ENCODE measurements at regions of chr1 and their contacts with region 1.

Region 1: DNA sequence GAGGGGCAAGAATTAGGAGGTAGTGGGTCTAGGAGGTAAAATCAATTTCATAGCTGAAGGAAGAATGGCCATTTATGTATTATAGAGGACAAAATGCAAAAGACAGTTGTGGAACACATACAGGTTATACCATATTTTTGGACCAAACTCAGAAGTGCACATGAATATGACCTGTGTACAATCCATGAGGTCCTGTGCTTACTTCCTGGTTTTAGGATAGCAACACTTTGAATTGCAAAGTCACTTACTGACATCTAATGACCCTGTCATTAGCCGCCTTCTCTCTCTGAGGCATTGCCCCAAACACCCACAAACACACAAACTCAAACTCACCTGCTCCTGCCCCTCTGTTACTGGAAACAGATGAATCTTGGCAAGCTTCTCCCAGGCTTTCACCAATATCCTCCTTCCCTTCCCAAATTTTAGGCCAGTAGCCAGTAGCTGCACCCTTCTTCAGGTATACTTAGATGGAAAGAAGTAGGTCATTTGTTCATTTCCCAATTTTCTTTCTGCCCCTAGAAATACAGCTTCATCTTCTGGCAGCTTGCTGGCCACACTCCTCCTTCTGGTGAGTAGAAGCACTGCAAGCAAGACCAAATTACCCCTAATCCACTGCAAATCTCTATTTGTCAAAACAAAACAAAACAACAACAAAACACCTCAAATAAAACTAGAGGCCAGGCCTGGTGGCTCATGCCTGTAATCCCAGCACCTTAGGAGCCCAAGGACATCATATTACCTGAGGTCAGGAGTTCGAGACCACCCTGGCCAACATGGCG is 13.7 kb upstream of the RPL5 start:
- DNase-seq: peak in 1 of 2 experiments; percentile 58
- H3K4me3 ChIP-seq: no peak overlapping the region
- H3K27ac ChIP-seq: no peak overlapping the region
- H3K4me1 ChIP-seq: no peaks in the 10 kb centered on the region
- H3K27me3 ChIP-seq: no peaks in the 10 kb centered on the region
- CTCF ChIP-seq: peak in 2 of 3 experiments; percentile 66 to 69; a peak in 3 of 4 replicates
- EP300 ChIP-seq: no peak
- POLR2A ChIP-seq: no peak
- RAD21 ChIP-seq: peak; percentile 69 to 71

Region 2: DNA sequence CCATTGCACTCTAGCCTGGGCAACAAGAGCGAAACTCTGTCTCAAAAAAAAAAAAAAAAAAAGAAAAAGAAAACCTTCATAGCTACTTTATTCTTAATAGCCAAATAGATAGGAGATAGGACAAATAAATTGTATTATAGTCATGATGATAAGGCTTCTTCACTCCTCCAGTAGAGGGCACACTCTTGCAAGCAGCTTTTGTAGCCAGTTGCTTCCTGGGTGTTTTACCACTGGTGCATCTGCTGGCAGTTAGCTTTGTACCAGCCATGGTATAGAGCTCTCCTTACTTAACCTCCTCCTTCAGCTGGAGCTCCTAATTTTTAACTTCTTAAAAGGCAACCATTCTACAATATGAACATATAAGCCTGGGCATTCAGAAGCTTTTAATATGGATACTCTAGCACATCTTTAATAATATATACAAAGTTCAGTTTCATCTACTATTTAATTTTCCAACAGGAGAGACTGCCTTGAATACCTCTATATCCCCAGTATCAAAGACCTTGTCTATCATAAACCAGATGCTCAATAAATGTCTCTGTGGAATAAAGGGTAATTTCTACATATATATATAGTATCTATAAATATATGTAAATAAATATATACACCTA is 69.0 kb before region 1 on chr1:
- CTCF ChIA-PET with region 1: interaction called, 86 read pairs
- POLR2A ChIA-PET with region 1: no interaction called
- DNase-seq: no peak
- H3K4me3 ChIP-seq: no peak overlapping the region
- H3K27ac ChIP-seq: no peak overlapping the region
- H3K4me1 ChIP-seq: no peaks in the 10 kb centered on the region
- H3K27me3 ChIP-seq: no peaks in the 10 kb centered on the region
- CTCF ChIP-seq: peak; percentile 15 to 75 (median 72)
- EP300 ChIP-seq: no peak
- POLR2A ChIP-seq: no peak
- RAD21 ChIP-seq: peak; percentile 71 to 75

Region 3: DNA sequence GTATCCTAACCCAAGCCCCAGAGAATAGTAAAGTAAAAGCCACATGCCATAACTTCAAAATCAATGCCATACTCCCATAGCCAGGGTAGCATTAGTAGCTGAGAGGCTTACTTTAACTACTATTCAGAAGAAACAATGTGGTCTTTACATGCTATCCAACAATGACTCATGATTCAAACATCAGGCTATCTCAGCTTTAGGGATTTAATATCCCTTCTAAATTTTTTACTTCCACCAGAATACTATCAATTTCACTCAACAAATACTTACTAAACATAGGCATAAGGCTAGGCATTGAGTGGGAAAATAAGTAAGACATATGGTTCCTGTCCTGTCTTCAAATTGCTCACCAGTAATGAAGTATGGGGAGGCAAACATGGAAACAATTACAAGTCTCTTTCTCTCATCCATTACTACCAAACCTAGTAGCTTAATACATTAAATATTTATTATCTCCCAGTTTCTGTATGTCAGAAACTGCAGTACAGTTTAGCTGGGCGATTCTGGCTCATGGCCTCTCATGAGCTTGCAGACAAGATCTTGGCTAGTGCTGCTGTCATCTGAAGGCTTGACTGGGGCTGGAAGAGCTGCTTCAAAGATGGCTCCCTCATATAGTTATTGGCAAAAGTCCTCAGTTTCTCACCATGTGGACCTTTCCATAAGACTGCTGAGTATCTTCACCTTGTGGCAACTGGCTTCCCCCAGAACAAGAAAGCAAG is 64.0 kb before region 1 on chr1:
- CTCF ChIA-PET with region 1: interaction called, 86 read pairs
- POLR2A ChIA-PET with region 1: no interaction called
- DNase-seq: no peak
- H3K4me3 ChIP-seq: no peak overlapping the region
- H3K27ac ChIP-seq: no peak overlapping the region
- H3K4me1 ChIP-seq: no peaks in the 10 kb centered on the region
- H3K27me3 ChIP-seq: no peaks in the 10 kb centered on the region
- CTCF ChIP-seq: no peak
- EP300 ChIP-seq: no peak
- POLR2A ChIP-seq: no peak
- RAD21 ChIP-seq: no peak

Region 4: GRCh38 chr1:92792340-92792782 is 25.8 kb before region 1 on chr1:
- CTCF ChIA-PET with region 1: interaction called, 10 read pairs
- POLR2A ChIA-PET with region 1: no interaction called
- DNase-seq: no peak
- H3K4me3 ChIP-seq: peak overlapping the region in 1 of 4 experiments; percentile 40; a peak in 1 of 8 replicates
- H3K27ac ChIP-seq: no peak overlapping the region
- H3K4me1 ChIP-seq: peaks cover 0 to 9% (median 2%) of the 10 kb centered on the region in 4 experiments; a peak in 3 of 7 replicates
- H3K27me3 ChIP-seq: no peaks in the 10 kb centered on the region
- CTCF ChIP-seq: no peak
- EP300 ChIP-seq: no peak
- POLR2A ChIP-seq: no peak
- RAD21 ChIP-seq: no peak

Region 5: DNA sequence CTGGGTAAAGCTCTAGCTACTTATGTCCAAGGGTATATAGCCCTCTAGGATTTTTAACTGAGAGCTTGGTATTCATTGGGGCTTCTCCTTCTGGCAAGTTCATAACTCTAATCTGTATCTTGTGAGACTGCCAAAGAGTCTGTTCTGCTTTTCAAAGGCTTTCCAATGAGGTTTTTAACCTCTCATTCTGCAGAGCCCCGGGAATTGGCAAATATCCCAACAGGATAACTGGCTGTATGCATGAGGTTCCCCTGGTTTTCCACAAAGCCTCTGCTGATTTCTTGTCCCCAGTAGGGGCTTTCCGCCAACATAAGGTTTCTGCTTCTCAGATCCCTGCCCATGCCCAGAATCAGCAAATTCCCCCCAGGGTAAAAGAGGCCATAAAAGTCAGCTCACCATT is 54.5 kb after region 1 on chr1:
- CTCF ChIA-PET with region 1: no interaction called
- POLR2A ChIA-PET with region 1: no interaction called
- DNase-seq: no peak
- H3K4me3 ChIP-seq: no peak overlapping the region
- H3K27ac ChIP-seq: no peak overlapping the region
- H3K4me1 ChIP-seq: no peaks in the 10 kb centered on the region; a peak in 1 of 7 replicates
- H3K27me3 ChIP-seq: no peaks in the 10 kb centered on the region
- CTCF ChIP-seq: no peak
- EP300 ChIP-seq: no peak
- POLR2A ChIP-seq: no peak
- RAD21 ChIP-seq: no peak

Measured in H1 (cell line).